Common myeloid progenitor, CD34-positive (primary cell): ENCODE measurements at regions of chr15 and their contacts with region 1.

Region 1: GRCh38 chr15:31215490-31216214 is 111.0 kb upstream of the KLF13 start:
- DNase-seq: peak; percentile 65 to 84 (median 76)
- H3K4me3 ChIP-seq: peak overlapping the region; percentile 33 to 77 (median 59)
- H3K27ac ChIP-seq: no peak overlapping the region
- H3K4me1 ChIP-seq: peaks cover 3 to 48% (median 17%) of the 10 kb centered on the region in 4 experiments
- H3K27me3 ChIP-seq: no peaks in the 10 kb centered on the region

Region 2: GRCh38 chr15:31265871-31266711 is 50.4 kb after region 1 on chr15:
- CTCF ChIA-PET with region 1: interaction called, 12 read pairs
- POLR2A ChIA-PET with region 1: interaction called, 6 read pairs
- DNase-seq: peak; percentile 75 to 98 (median 97)
- H3K4me3 ChIP-seq: peak overlapping the region in 3 of 7 experiments; percentile 12 to 39 (median 29)
- H3K27ac ChIP-seq: peak overlapping the region in 1 of 2 experiments; percentile 43
- H3K4me1 ChIP-seq: peaks cover 16 to 85% (median 76%) of the 10 kb centered on the region in 4 experiments
- H3K27me3 ChIP-seq: no peaks in the 10 kb centered on the region